Thyroid gland (tissue), 4 donors: ENCODE measurements at regions of chr12 and their contacts with region 1.

Region 1: GRCh38 chr12:106223485-106224354 is 24.1 kb downstream of the CKAP4 start:
- DNase-seq: peak; percentile 61 to 71
- H3K4me3 ChIP-seq: no peak overlapping the region
- H3K27ac ChIP-seq: no peak overlapping the region
- H3K4me1 ChIP-seq: peaks cover 11 to 16% of the 10 kb centered on the region in 2 donors
- H3K27me3 ChIP-seq: no peaks in the 10 kb centered on the region
- CTCF ChIP-seq: peak; percentile 70 to 94 (median 84)
- POLR2A ChIP-seq: no peak

Region 2: GRCh38 chr12:105420659-105421240 is 803.0 kb before region 1 on chr12:
- intact Hi-C with region 1: loop called (anchors 5 kb)
- DNase-seq: peak; percentile 78 to 87
- H3K4me3 ChIP-seq: no peak overlapping the region
- H3K27ac ChIP-seq: no peak overlapping the region
- H3K4me1 ChIP-seq: no peaks in the 10 kb centered on the region
- H3K27me3 ChIP-seq: no peaks in the 10 kb centered on the region
- CTCF ChIP-seq: peak; percentile 85 to 98 (median 90)
- POLR2A ChIP-seq: no peak

Region 3: DNA sequence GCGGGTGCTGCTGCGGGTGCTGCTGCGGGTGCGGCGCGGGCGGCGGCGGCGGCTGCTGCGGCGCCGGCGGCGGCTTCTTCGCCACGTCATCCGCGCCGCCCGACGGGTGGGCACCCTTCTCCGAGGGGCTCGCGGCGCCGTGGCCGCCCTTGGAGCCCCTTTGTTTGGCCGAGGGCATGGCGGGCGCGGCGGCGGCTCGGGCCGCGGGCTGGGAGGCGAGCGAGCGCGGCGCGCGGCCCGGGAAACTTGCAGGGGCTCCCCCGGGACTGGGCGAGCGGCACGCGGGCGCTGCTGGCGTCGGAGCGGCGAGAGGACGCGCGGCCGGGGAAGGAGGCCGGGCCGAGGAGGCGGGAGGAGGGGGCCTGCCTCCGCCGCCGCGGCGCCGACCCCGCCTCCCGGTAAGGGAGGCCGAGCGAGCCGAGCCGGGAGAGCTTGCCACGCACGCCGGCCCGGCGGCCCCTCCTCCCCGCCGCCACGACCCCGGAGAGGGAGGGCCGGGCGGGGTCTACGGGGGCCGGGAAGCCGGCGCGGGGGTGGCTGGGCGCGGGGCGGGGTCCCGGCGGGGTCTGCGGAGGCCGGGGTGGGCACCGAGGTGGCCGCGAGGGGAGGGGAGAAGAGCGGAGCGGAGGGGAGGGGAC is 24.1 kb after region 1 on chr12 and contains the start of gene CKAP4:
- intact Hi-C with region 1: no loop called
- DNase-seq: peak; percentile 84
- H3K4me3 ChIP-seq: peak within 1 kb of the TSS; percentile 43 to 81 (median 77)
- H3K27ac ChIP-seq: peak within 1 kb of the TSS; percentile 94
- H3K4me1 ChIP-seq: peaks cover 14 to 26% of the 10 kb centered on the region in 2 donors
- H3K27me3 ChIP-seq: no peaks in the 10 kb centered on the region
- CTCF ChIP-seq: peak in 2 of 6 experiments; percentile 2 to 6
- POLR2A ChIP-seq: peak; percentile 62 to 86
- total RNA-seq, gene CKAP4: 40.7 to 55.5 (median 48.9) TPM

Region 4: DNA sequence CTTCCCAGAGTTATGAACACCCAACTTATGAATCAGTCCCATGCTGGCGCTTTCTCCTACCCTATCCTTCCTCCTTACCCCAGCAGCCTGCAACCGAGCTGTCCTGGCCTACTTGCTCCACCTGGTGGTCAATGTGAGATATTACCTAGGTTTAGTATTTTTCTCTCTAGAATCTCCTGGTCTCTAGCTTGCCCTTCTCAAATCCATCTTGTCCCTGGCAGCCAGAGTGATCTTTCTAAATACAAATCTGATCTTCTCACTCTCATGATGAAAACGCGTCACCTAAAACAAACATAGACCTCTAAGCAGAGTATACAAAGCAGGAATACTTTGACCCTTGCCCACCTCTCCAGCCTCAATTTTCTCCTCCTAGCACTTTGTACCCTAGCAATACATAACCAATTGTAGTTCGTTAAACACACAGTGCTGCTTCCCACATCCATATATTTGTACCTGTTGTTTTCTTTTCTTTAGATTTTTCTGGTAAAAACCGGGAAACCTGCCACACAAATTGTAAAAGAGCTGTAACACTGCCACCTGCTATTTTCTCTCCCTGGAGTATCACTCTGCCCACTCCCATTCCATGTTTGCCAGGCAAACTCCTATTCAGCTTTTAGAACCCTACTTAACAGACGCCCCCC is 58.9 kb after region 1 on chr12:
- intact Hi-C with region 1: loop called (anchors 2 kb)
- DNase-seq: peak; percentile 19 to 31
- H3K4me3 ChIP-seq: no peak overlapping the region
- H3K27ac ChIP-seq: no peak overlapping the region
- H3K4me1 ChIP-seq: no peaks in the 10 kb centered on the region
- H3K27me3 ChIP-seq: no peaks in the 10 kb centered on the region
- CTCF ChIP-seq: peak; percentile 43 to 85 (median 66)
- POLR2A ChIP-seq: no peak

Region 5: DNA sequence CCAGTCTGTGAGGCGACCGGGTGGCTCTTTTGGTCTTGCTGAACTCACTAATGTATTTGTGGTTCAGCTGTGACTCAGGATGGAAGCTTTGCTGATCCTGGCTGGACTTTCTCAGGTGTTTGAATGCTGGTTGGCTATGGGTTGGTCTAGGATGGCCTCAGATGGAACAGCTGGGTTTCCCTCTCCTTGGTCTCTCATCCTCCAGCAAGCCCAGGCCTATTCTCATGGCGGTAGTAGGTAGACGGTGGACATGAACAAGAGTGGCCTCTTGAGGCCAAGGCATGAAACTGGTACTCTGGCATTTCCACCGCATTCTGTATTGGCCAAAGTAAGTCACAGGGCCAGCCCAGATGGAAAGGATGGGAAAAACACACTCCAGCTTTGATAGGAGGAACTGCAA is 122.0 kb after region 1 on chr12:
- intact Hi-C with region 1: loop called (anchors 10 kb)
- DNase-seq: peak; percentile 35 to 45
- H3K4me3 ChIP-seq: no peak overlapping the region
- H3K27ac ChIP-seq: no peak overlapping the region
- H3K4me1 ChIP-seq: peaks cover 19 to 21% of the 10 kb centered on the region in 2 donors
- H3K27me3 ChIP-seq: no peaks in the 10 kb centered on the region
- CTCF ChIP-seq: peak in 4 of 6 experiments; percentile 6 to 46 (median 44)
- POLR2A ChIP-seq: no peak